ENCODE measurements at regions of chr19 and their contacts with region 1.

Region 1: GRCh38 chr19:40777937-40778705 is at the start of gene RAB4B:
- DNase-seq: peak; percentile 100
- ATAC-seq: peak; percentile 83
- H3K4me3 ChIP-seq: peak within 1 kb of the TSS; percentile 87 to 89
- H3K4me3 Mint-ChIP-seq: peak within 1 kb of the TSS; percentile 92
- H3K27ac ChIP-seq: peak within 1 kb of the TSS; percentile 93 to 98
- H3K27ac Mint-ChIP-seq: peak within 1 kb of the TSS; percentile 95
- H3K4me1 ChIP-seq: peaks cover 26% of the 10 kb centered on the region
- H3K4me1 Mint-ChIP-seq: peaks cover 37% of the 10 kb centered on the region
- H3K27me3 ChIP-seq: no peaks in the 10 kb centered on the region
- H3K27me3 Mint-ChIP-seq: no peaks in the 10 kb centered on the region
- CTCF ChIP-seq: no peak
- total RNA-seq, gene RAB4B: 19.9 to 21.3 TPM

Region 2: DNA sequence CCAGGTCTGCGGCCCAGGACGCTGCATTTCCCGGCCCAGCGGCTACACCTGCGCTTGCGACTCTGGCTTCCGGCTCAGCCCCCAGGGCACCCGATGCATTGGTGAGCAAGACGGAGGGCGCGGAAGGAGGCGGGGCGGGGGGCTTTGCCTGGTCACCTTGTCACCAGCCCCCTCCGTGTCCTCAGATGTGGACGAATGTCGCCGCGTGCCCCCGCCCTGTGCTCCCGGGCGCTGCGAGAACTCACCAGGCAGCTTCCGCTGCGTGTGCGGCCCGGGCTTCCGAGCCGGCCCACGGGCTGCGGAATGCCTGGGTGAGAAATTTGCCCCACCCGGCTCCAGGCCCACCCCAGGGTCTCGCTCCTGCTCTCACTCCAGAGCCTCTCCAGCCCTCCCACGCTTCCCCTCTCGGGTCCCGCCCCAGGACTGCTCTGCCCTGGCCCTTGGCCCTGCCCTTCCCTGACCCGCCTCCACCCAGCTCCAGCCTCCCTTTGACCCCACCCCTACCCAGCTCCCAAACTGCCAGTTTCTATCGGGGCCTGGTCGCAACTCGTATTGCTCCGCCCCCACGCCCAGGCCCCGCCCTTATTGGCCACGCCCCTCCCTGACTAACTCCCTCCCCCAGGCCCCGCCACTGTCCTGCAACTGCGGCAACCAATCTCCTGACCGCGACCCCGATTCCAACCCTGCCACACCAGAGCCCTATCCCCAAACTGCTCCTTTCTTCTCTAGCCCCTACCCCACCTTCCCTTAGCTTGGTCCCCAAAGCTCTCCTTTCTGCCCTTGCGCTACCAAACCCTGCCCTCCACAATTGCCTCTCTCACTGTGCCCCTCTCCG is 168.3 kb before region 1 on chr19:
- CTCF ChIA-PET with region 1: no interaction called
- POLR2A ChIA-PET with region 1: interaction called, 3 read pairs
- intact Hi-C with region 1: loop called in 1 of 2 experiments (anchors 2 kb)
- DNase-seq: peak; percentile 71 to 90 (median 84)
- ATAC-seq: peak; percentile 35
- H3K4me3 ChIP-seq: peak overlapping the region; percentile 50 to 56
- H3K4me3 Mint-ChIP-seq: peak overlapping the region; percentile 78
- H3K27ac ChIP-seq: peak overlapping the region; percentile 72 to 89
- H3K27ac Mint-ChIP-seq: peak overlapping the region; percentile 94
- H3K4me1 ChIP-seq: peaks cover 44% of the 10 kb centered on the region
- H3K4me1 Mint-ChIP-seq: peaks cover 68% of the 10 kb centered on the region
- H3K27me3 ChIP-seq: no peaks in the 10 kb centered on the region
- H3K27me3 Mint-ChIP-seq: no peaks in the 10 kb centered on the region
- CTCF ChIP-seq: no peak

Region 3: GRCh38 chr19:40671404-40671803 is 106.7 kb before region 1 on chr19:
- CTCF ChIA-PET with region 1: no interaction called
- POLR2A ChIA-PET with region 1: no interaction called
- intact Hi-C with region 1: no loop called
- DNase-seq: no peak
- ATAC-seq: no peak
- H3K4me3 ChIP-seq: no peak overlapping the region
- H3K4me3 Mint-ChIP-seq: no peak overlapping the region
- H3K27ac ChIP-seq: no peak overlapping the region
- H3K27ac Mint-ChIP-seq: no peak overlapping the region
- H3K4me1 ChIP-seq: peaks cover 4% of the 10 kb centered on the region
- H3K4me1 Mint-ChIP-seq: no peaks in the 10 kb centered on the region
- H3K27me3 ChIP-seq: no peaks in the 10 kb centered on the region
- H3K27me3 Mint-ChIP-seq: no peaks in the 10 kb centered on the region
- CTCF ChIP-seq: no peak

Region 4: GRCh38 chr19:40716655-40717324 is 61.3 kb before region 1 on chr19 and contains the starts of genes COQ8B and ITPKC:
- CTCF ChIA-PET with region 1: no interaction called
- POLR2A ChIA-PET with region 1: interaction called, 10 read pairs
- intact Hi-C with region 1: loop called (anchors 1 kb)
- DNase-seq: peak; percentile 98 to 100 (median 100)
- ATAC-seq: peak; percentile 74
- H3K4me3 ChIP-seq: peak within 1 kb of the TSS; percentile 66 to 93
- H3K4me3 Mint-ChIP-seq: peak within 1 kb of the TSS; percentile 88
- H3K27ac ChIP-seq: peak within 1 kb of the TSS; percentile 88 to 89
- H3K27ac Mint-ChIP-seq: peak within 1 kb of the TSS; percentile 97
- H3K4me1 ChIP-seq: peaks cover 61% of the 10 kb centered on the region
- H3K4me1 Mint-ChIP-seq: peaks cover 70% of the 10 kb centered on the region
- H3K27me3 ChIP-seq: no peaks in the 10 kb centered on the region
- H3K27me3 Mint-ChIP-seq: no peaks in the 10 kb centered on the region
- CTCF ChIP-seq: no peak
- total RNA-seq, gene COQ8B: 14.0 to 14.2 TPM
- total RNA-seq, gene ITPKC: 5.9 to 6.4 TPM

Region 5: DNA sequence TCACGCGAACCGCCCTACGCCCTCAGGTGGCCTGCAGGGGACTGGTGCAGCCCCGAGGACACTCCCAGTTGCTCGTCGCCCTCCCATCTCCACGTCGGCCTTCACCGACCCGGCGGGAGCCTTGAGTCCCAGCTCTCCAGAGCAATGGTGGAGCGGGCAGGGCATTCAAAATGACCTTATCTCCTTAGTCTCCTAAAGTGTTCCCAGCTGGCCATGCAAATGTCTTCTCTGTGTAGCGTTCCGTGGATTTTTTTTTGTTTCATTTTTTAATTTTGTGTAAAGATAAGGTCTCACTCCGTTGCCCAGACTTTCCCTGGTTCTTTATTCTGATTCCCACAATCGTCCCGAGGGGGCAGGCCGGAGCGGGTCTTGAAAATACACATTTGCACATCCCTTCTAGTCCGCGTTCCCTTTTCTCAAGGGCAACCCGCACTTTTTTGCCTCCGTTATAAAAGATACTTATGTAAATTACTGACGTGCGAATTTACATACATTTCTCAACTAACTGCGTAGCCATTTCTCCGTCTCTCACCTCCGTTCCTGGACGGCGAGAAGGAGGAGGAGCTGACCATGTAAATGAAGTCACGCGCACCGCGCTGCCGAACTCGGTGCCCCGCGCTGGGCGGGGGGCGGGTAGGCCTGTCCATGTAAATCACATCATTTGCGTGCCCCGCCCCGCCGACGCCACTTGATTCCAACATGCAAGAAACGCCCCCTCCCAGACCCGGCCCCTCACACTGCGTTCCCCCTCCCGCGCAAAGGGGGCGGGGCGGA is 20.3 kb after region 1 on chr19:
- CTCF ChIA-PET with region 1: interaction called, 13 read pairs
- POLR2A ChIA-PET with region 1: interaction called, 75 read pairs
- intact Hi-C with region 1: loop called (anchors 1 kb)
- DNase-seq: peak; percentile 100
- ATAC-seq: peak; percentile 82
- H3K4me3 ChIP-seq: peak overlapping the region; percentile 60 to 91
- H3K4me3 Mint-ChIP-seq: peak overlapping the region; percentile 98
- H3K27ac ChIP-seq: peak overlapping the region; percentile 97
- H3K27ac Mint-ChIP-seq: peak overlapping the region; percentile 97
- H3K4me1 ChIP-seq: peaks cover 45% of the 10 kb centered on the region
- H3K4me1 Mint-ChIP-seq: peaks cover 50% of the 10 kb centered on the region
- H3K27me3 ChIP-seq: no peaks in the 10 kb centered on the region
- H3K27me3 Mint-ChIP-seq: no peaks in the 10 kb centered on the region
- CTCF ChIP-seq: peak; percentile 56

Region 6: GRCh38 chr19:40822161-40822560 is 44.0 kb after region 1 on chr19:
- CTCF ChIA-PET with region 1: interaction called, 11 read pairs
- POLR2A ChIA-PET with region 1: interaction called, 4 read pairs
- intact Hi-C with region 1: no loop called
- DNase-seq: no peak
- ATAC-seq: no peak
- H3K4me3 ChIP-seq: no peak overlapping the region
- H3K4me3 Mint-ChIP-seq: no peak overlapping the region
- H3K27ac ChIP-seq: no peak overlapping the region
- H3K27ac Mint-ChIP-seq: no peak overlapping the region
- H3K4me1 ChIP-seq: peaks cover 36% of the 10 kb centered on the region
- H3K4me1 Mint-ChIP-seq: peaks cover 38% of the 10 kb centered on the region
- H3K27me3 ChIP-seq: no peaks in the 10 kb centered on the region
- H3K27me3 Mint-ChIP-seq: no peaks in the 10 kb centered on the region
- CTCF ChIP-seq: no peak

Region 7: GRCh38 chr19:40981591-40981990 is 203.5 kb after region 1 on chr19:
- CTCF ChIA-PET with region 1: no interaction called
- POLR2A ChIA-PET with region 1: no interaction called
- intact Hi-C with region 1: no loop called
- DNase-seq: no peak
- ATAC-seq: no peak
- H3K4me3 ChIP-seq: no peak overlapping the region
- H3K4me3 Mint-ChIP-seq: no peak overlapping the region
- H3K27ac ChIP-seq: no peak overlapping the region
- H3K27ac Mint-ChIP-seq: no peak overlapping the region
- H3K4me1 ChIP-seq: no peaks in the 10 kb centered on the region
- H3K4me1 Mint-ChIP-seq: no peaks in the 10 kb centered on the region
- H3K27me3 ChIP-seq: no peaks in the 10 kb centered on the region
- H3K27me3 Mint-ChIP-seq: peaks cover 25% of the 10 kb centered on the region
- CTCF ChIP-seq: no peak